ENCODE measurements at regions of chr2 and their contacts with region 1.

Region 1: DNA sequence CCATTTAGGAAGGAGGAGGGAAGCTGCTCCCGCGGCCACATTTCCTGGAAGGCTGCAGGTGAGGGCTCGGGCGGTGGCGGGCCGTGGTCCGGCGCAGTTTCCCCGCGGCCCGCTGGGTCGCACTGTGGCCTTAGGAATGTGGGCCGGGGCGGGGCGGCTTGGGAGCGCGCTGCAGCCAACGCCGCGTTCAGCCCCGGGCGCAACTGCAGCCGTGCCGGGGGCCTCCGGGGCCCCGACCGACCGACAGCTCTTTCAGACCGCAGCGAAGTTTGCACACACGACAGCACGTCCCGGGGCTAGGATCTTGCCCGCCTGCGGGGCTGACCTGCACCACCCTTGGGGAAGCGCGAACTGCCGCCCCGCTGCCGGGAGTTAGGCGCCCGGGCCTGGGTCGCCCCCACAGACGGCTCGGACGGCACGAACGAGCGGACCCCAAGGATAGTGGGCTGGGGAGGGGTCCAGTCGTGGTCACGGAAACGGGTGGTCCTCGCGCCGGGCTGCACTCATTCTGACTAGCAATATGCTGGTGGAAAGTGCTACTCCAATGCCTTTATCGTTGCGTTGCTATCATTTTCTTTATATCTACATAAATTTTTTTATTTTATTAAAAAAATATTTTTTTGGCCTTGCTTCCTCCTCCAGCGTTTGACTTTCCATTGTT is 69.9 kb upstream of the DLX2 start:
- DNase-seq: peak; percentile 75 to 98
- H3K4me3 ChIP-seq: peak overlapping the region; percentile 76
- H3K27ac ChIP-seq: no peak overlapping the region
- H3K4me1 ChIP-seq: peaks cover 17% of the 10 kb centered on the region
- H3K27me3 ChIP-seq: no peaks in the 10 kb centered on the region
- CTCF ChIP-seq: peak; percentile 98

Region 2: GRCh38 chr2:171086352-171087290 is 1086.0 kb before region 1 on chr2:
- CTCF ChIA-PET with region 1: interaction called, 7 read pairs
- POLR2A ChIA-PET with region 1: interaction called, 3 read pairs
- intact Hi-C with region 1: loop called (anchors 2 kb)
- DNase-seq: peak; percentile 52 to 59
- H3K4me3 ChIP-seq: no peak overlapping the region
- H3K27ac ChIP-seq: no peak overlapping the region
- H3K4me1 ChIP-seq: no peaks in the 10 kb centered on the region
- H3K27me3 ChIP-seq: no peaks in the 10 kb centered on the region
- CTCF ChIP-seq: peak; percentile 84

Region 3: DNA sequence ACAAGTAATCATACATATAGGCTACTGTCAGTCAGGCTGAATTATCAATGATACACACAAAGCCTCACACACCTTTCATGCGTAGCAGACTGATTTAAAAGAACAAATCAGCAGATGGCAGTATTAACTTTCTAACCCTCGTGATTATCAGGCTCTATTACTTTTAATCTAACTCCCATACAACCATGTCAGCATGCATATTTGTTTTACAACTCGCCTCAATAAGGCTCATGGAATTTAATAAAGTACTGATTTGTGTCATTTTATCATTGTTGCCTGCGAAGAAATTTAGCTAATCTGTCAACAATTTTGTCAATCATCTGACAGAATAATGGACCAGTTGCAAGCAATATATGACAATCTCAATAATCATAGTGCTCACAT is 361.4 kb before region 1 on chr2:
- CTCF ChIA-PET with region 1: no interaction called
- POLR2A ChIA-PET with region 1: no interaction called
- intact Hi-C with region 1: loop called (anchors 1 kb)
- DNase-seq: peak in 1 of 2 experiments; percentile 55
- H3K4me3 ChIP-seq: no peak overlapping the region
- H3K27ac ChIP-seq: no peak overlapping the region
- H3K4me1 ChIP-seq: peaks cover 19% of the 10 kb centered on the region
- H3K27me3 ChIP-seq: no peaks in the 10 kb centered on the region
- CTCF ChIP-seq: peak; percentile 70

Region 4: DNA sequence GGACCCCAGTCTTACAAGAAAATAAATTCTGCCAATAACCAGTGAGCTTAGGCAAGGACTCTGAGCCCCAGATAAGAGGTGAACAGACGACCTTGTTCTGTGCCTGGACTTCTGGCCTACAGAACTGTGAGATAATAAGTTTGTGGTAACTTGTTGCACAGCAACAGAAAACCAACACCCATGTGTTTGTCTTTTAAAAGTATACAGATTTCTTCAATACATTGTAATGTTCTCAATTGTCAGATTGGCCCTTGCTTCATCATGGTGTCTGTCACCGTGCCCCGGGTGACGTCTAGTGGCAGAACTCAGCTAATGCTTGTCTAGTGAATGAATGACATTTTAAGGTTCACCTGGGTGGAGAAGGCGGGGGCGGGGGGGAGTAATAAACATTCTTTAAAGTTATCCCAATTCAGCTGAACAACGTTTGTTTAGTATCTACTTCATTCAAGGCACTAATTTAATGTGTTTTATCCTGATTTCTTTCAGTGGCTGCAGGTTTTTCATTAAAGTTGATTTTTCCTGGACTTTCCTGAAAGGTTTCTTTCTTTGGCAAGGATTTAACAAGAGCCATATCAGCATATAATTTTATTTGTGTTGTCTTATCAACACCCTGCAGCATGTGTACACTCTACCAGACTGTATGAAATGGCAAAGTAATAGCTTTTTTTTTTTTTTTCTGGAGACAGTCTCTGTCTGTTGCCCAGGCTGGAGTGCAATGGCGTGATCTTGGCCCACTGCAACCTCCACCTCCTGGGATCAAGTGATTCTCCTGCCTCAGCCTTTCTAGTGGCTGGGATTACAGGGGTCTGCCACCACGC is 53.8 kb after region 1 on chr2:
- CTCF ChIA-PET with region 1: interaction called, 21 read pairs
- POLR2A ChIA-PET with region 1: interaction called, 4 read pairs
- intact Hi-C with region 1: loop called (anchors 1 kb)
- DNase-seq: peak; percentile 81 to 88
- H3K4me3 ChIP-seq: no peak overlapping the region
- H3K27ac ChIP-seq: no peak overlapping the region
- H3K4me1 ChIP-seq: peaks cover 60% of the 10 kb centered on the region
- H3K27me3 ChIP-seq: no peaks in the 10 kb centered on the region
- CTCF ChIP-seq: peak; percentile 82

Region 5: GRCh38 chr2:172339371-172340010 is 166.8 kb after region 1 on chr2:
- CTCF ChIA-PET with region 1: no interaction called
- POLR2A ChIA-PET with region 1: no interaction called
- intact Hi-C with region 1: loop called (anchors 5 kb)
- DNase-seq: no peak
- H3K4me3 ChIP-seq: no peak overlapping the region
- H3K27ac ChIP-seq: no peak overlapping the region
- H3K4me1 ChIP-seq: peaks cover 8% of the 10 kb centered on the region
- H3K27me3 ChIP-seq: no peaks in the 10 kb centered on the region
- CTCF ChIP-seq: no peak

Region 6: GRCh38 chr2:172555522-172556283 is 383.1 kb after region 1 on chr2 and contains the start of gene PDK1:
- CTCF ChIA-PET with region 1: no interaction called
- POLR2A ChIA-PET with region 1: no interaction called
- intact Hi-C with region 1: loop called (anchors 5 kb)
- DNase-seq: peak; percentile 87 to 99
- H3K4me3 ChIP-seq: peak within 1 kb of the TSS; percentile 75
- H3K27ac ChIP-seq: peak within 1 kb of the TSS; percentile 65
- H3K4me1 ChIP-seq: peaks cover 58% of the 10 kb centered on the region
- H3K27me3 ChIP-seq: no peaks in the 10 kb centered on the region
- CTCF ChIP-seq: no peak
- total RNA-seq, gene PDK1: 15.9 and 18.5 TPM in 2 replicates